GM13976 (cell line): ENCODE measurements at regions of chr6 and their contacts with region 1.

Region 1: DNA sequence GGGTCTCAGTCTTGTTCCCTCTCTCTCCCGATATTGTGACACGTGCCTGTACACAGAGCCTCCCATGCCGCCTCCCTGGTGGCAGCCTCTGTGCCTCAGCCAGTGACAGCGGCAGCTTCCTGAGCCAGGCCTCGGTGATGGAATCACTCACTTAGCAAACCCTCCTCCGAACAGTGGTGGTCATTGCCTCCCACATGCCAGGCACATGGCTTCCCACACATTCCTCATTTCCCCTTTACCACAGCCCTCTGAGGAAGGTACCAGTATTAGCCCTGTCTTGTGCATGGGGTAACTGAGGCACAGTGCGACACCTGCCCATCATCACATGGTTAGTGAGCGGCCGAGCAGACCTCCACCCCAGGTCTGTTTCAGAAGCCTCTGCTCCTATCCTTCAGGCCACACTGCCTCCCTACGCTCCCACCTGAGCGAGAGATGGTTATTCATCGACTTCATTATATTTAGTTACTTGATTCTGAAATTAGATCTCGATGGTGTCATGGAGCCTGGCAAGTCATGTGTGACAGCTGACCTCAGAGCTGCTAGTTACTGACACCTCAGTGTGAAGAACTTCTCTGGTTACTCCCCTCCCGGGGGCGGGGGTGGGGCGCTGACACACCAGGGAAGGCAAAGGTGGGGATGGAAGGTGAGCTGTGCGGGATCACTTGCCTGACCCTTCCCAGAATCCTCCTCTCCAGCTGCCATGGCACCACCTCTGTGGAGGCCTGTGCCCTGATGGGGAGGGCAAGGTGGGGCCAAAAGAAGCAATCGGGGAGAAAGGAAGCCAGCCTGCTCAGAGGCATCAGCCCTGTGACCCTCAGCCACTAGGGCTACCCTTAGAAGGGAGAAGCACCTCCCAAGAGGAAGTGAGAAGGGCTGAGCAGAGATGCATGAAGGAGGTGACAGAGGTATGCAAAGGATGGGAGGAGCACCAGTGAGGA is 17.9 kb downstream of the MDGA1 start:
- DNase-seq: peak; percentile 91
- CTCF ChIP-seq: no peak

Region 2: DNA sequence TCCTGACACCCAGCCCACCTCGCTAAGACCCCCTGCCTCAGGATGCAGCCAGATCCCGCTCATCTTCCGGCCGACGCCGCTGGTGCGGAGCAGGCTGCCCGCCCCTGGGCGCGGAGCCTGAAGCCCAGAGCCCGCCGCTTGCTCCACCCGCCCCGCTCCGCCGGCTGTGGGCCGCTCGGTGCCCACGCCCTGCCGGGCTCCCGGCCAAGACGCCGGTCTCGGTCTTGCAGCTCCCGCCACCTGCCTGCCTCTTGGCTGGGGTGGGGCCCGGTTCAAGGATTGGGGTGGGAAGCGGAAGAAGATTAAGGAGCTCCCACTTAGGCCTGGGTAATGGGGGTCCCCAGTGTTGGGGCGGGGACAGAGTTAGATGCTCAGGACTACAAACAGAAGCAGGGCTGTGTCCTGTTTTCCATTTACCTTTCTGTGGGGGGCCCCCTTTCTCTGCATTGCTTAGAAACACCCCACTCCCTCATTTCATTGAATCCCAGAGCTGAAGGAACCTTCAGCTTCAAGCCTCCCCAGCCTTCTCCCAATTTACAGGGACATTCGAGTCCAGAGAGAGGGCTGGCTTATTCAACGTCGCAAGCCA is 54.7 kb before region 1 on chr6:
- in situ Hi-C with region 1: loop called (anchors 10 kb)
- DNase-seq: peak; percentile 65
- CTCF ChIP-seq: no peak

Region 3: DNA sequence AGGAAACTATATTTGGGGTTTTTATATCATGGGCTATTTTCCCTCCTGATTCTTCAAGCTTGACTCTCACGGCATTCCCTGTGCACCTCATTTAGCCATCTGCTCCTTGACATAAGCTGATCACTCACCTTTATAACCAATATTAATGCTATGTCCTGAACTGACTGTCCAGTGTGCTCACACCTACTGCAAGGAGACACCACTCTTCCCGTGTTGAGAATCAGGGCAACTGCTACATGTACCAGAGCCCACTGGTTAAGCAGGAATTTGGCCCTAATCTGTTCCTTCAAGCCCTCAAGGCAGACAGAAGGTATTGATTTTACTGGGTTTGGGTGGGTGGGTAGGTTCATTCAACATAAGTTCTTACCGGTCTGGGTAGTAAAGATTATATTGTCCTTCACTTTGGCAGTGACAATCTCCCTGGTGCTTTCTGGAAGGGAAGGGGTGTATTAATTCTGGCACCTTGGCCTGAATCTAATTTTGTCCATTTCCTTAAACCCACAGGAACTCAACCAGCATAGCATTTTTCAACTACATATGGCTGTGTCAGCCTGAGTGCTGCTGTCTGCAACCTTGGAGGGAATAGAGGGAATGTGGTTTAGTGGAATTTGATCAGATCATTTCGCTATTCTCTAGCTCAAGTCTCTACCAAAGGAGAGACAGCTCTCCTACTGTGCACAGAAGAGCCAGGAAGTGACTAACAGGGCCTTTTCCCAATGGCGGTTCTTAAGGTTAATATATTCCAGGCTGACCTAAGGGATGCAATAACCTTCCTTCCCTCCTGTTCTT is 666.7 kb after region 1 on chr6:
- in situ Hi-C with region 1: no loop called
- DNase-seq: no peak
- CTCF ChIP-seq: no peak